ENCODE measurements at regions of chr17 and their contacts with region 1.

Region 1: GRCh38 chr17:80251966-80252365 is 8.7 kb upstream of the RNF213 start:
- DNase-seq: no peak

Region 2: GRCh38 chr17:80233202-80233601 is 18.8 kb before region 1 on chr17:
- intact Hi-C with region 1: loop called in 1 of 2 experiments (anchors 1 kb)
- DNase-seq: no peak